ENCODE measurements at regions of chr16 and their contacts with region 1.

Region 1: GRCh38 chr16:71412270-71413160 is 29.3 kb downstream of the TLE7 start:
- DNase-seq: peak; percentile 77
- ATAC-seq: peak; percentile 88
- H3K4me3 Mint-ChIP-seq: no peak overlapping the region
- H3K27ac Mint-ChIP-seq: no peak overlapping the region
- H3K4me1 Mint-ChIP-seq: peaks cover 9% of the 10 kb centered on the region
- H3K27me3 Mint-ChIP-seq: peaks cover 12% of the 10 kb centered on the region
- CTCF ChIP-seq: peak; percentile 85

Region 2: GRCh38 chr16:71387045-71387871 is 25.3 kb before region 1 on chr16:
- CTCF ChIA-PET with region 1: interaction called, 19 read pairs
- POLR2A ChIA-PET with region 1: no interaction called
- intact Hi-C with region 1: no loop called
- DNase-seq: no peak
- ATAC-seq: no peak
- H3K4me3 Mint-ChIP-seq: no peak overlapping the region
- H3K27ac Mint-ChIP-seq: no peak overlapping the region
- H3K4me1 Mint-ChIP-seq: peaks cover 5% of the 10 kb centered on the region
- H3K27me3 Mint-ChIP-seq: peaks cover 11% of the 10 kb centered on the region
- CTCF ChIP-seq: no peak

Region 3: DNA sequence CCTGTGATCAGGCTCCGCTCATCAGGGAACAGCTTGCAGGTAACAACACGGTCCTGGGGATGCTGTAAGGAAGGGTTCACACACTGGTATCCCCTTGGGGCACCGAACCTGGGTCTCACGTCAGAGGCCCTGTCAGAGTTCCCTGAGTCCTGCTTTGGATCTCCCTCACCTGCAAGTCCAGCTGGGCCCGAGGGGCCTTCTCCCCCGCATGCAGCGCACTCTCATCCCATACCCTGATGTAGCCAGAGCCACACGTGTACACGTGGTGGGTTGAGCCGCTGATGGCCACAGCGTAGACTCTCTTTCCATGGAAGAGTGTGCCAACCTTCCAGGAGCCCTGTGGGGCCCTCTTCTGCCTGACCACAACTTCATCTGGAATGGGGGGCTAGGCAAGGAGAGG is 19.4 kb after region 1 on chr16:
- CTCF ChIA-PET with region 1: interaction called, 22 read pairs
- POLR2A ChIA-PET with region 1: no interaction called
- intact Hi-C with region 1: no loop called
- DNase-seq: no peak
- ATAC-seq: no peak
- H3K4me3 Mint-ChIP-seq: no peak overlapping the region
- H3K27ac Mint-ChIP-seq: no peak overlapping the region
- H3K4me1 Mint-ChIP-seq: peaks cover 1% of the 10 kb centered on the region
- H3K27me3 Mint-ChIP-seq: peaks cover 8% of the 10 kb centered on the region
- CTCF ChIP-seq: no peak

Region 4: DNA sequence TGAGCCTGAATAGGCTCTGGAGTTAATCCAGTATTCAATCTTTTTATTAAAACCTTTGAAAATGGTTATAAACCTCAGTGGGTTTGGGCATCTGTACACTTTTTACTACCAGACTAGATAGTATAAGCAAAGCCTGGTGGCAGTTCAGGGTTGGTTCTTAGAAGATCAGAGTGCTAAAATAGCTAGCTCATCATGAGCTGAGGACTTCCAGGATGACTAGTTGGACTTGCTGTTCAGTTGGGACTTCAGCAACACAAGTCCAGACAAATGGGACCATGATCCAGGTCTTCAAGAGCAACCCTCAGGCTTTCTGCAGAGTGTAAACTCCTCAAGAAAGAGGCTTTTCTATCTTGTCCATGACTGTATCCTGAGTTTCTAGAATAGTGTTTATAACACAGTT is 77.8 kb after region 1 on chr16:
- CTCF ChIA-PET with region 1: interaction called, 13 read pairs
- POLR2A ChIA-PET with region 1: no interaction called
- intact Hi-C with region 1: no loop called
- DNase-seq: no peak
- ATAC-seq: no peak
- H3K4me3 Mint-ChIP-seq: no peak overlapping the region
- H3K27ac Mint-ChIP-seq: no peak overlapping the region
- H3K4me1 Mint-ChIP-seq: peaks cover 4% of the 10 kb centered on the region
- H3K27me3 Mint-ChIP-seq: peaks cover 2% of the 10 kb centered on the region
- CTCF ChIP-seq: no peak

Region 5: DNA sequence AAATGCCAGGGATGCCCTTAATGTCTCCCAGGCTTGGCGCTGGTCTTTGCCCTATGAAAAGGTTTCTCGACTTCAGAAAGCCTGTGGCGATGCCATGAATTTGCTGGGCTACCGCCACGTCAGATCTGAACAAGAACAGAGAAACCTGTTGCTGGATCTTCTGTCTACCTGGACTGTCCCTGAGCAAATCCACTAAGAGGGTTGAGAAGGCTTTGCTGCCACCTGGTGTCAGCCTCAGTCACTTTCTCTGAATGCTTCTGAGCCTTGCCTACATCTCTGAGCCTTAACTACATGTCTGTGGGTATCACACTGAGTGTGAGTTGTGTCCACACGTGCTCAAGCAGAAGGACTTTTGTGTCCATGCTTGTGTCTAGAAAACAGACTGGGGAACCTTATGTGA is 125.1 kb after region 1 on chr16:
- CTCF ChIA-PET with region 1: interaction called, 20 read pairs
- POLR2A ChIA-PET with region 1: no interaction called
- intact Hi-C with region 1: no loop called
- DNase-seq: peak; percentile 69
- ATAC-seq: peak; percentile 76
- H3K4me3 Mint-ChIP-seq: no peak overlapping the region
- H3K27ac Mint-ChIP-seq: no peak overlapping the region
- H3K4me1 Mint-ChIP-seq: no peaks in the 10 kb centered on the region
- H3K27me3 Mint-ChIP-seq: peaks cover 4% of the 10 kb centered on the region
- CTCF ChIP-seq: peak; percentile 49